Activated CD4-positive, alpha-beta memory T cell treated with anti-CD3 and anti-CD28 coated beads, Interleukin-2, amount 10 ng/mL, durations not matched to agents 7 days and 5 days (primary cell): ENCODE measurements at regions of chr6 and their contacts with region 1.

Region 1: GRCh38 chr6:32984605-32985389 is 16.4 kb downstream of the BRD2 start:
- DNase-seq: peak; percentile 91
- H3K4me3 Mint-ChIP-seq: no peak overlapping the region
- H3K27ac Mint-ChIP-seq: peak overlapping the region; percentile 37
- H3K4me1 Mint-ChIP-seq: peaks cover 42% of the 10 kb centered on the region
- H3K27me3 Mint-ChIP-seq: peaks cover under 1% of the 10 kb centered on the region

Region 2: GRCh38 chr6:32838114-32838958 is 146.5 kb before region 1 on chr6 and contains the start of gene TAP2:
- CTCF ChIA-PET with region 1: interaction called, 27 read pairs
- POLR2A ChIA-PET with region 1: interaction called, 5 read pairs
- DNase-seq: peak; percentile 98
- H3K4me3 Mint-ChIP-seq: peak within 1 kb of the TSS; percentile 77
- H3K27ac Mint-ChIP-seq: peak within 1 kb of the TSS; percentile 99
- H3K4me1 Mint-ChIP-seq: peaks cover 80% of the 10 kb centered on the region
- H3K27me3 Mint-ChIP-seq: no peaks in the 10 kb centered on the region
- total RNA-seq, gene TAP2: 203 to 211 TPM

Region 3: DNA sequence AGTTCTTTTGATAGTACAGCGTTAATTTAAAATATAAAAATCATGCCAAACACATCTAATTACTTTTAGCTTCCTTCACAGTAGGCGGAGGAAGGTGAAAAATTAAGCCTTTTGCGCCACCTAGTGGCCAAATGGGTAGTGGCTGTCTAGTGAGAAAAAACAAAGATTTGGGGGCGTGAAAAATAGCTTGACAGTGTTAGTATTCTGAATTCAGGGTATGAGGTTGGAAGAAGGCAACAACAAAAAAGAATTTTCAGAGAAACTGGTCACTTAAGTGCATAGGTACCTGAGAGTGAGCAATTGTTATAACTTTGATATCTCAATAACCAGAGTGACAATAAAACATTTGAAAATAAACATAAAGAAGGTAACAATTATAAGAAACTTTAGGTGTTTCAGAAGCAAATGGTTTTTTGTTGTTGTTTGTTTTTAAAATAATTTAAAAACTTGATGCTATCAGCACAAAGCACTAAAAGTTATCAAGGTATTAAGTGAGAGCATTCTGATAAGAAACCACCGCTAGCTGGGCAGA is 116.5 kb before region 1 on chr6:
- CTCF ChIA-PET with region 1: interaction called, 45 read pairs
- POLR2A ChIA-PET with region 1: interaction called, 4 read pairs
- DNase-seq: peak; percentile 88
- H3K4me3 Mint-ChIP-seq: no peak overlapping the region
- H3K27ac Mint-ChIP-seq: no peak overlapping the region
- H3K4me1 Mint-ChIP-seq: peaks cover 35% of the 10 kb centered on the region
- H3K27me3 Mint-ChIP-seq: peaks cover 7% of the 10 kb centered on the region

Region 4: DNA sequence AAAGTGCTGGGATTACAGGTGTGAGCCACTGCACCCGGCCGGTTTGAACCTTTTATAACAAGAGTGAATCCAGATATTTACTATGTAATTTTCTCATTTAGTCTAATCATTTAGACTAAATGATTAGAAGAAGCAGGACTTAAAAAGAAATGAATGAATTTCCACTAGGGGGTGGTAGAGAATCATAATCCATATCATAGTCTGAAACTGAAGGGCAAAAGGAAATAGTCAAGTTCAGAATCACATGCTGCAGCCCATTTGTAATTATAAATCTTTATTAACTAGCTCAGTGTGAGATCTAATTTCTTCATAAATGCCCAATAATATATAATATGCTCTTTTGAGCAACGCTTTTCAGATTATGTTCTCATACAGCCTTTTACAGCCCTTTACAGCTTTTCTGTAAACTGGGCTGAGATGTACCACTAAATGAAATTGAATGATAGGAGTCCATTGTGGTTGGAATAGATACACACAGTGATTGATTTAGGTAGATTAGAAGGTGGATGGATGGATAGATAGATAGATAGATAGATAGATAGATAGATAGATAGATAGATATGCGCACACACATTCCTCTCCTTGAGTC is 99.0 kb before region 1 on chr6:
- CTCF ChIA-PET with region 1: interaction called, 70 read pairs
- POLR2A ChIA-PET with region 1: interaction called, 9 read pairs
- DNase-seq: no peak
- H3K4me3 Mint-ChIP-seq: no peak overlapping the region
- H3K27ac Mint-ChIP-seq: no peak overlapping the region
- H3K4me1 Mint-ChIP-seq: peaks cover 2% of the 10 kb centered on the region
- H3K27me3 Mint-ChIP-seq: peaks cover 4% of the 10 kb centered on the region

Region 5: GRCh38 chr6:32905078-32905477 is 79.7 kb before region 1 on chr6:
- CTCF ChIA-PET with region 1: interaction called, 10 read pairs
- POLR2A ChIA-PET with region 1: no interaction called
- DNase-seq: no peak
- H3K4me3 Mint-ChIP-seq: no peak overlapping the region
- H3K27ac Mint-ChIP-seq: no peak overlapping the region
- H3K4me1 Mint-ChIP-seq: no peaks in the 10 kb centered on the region
- H3K27me3 Mint-ChIP-seq: peaks cover 16% of the 10 kb centered on the region

Region 6: DNA sequence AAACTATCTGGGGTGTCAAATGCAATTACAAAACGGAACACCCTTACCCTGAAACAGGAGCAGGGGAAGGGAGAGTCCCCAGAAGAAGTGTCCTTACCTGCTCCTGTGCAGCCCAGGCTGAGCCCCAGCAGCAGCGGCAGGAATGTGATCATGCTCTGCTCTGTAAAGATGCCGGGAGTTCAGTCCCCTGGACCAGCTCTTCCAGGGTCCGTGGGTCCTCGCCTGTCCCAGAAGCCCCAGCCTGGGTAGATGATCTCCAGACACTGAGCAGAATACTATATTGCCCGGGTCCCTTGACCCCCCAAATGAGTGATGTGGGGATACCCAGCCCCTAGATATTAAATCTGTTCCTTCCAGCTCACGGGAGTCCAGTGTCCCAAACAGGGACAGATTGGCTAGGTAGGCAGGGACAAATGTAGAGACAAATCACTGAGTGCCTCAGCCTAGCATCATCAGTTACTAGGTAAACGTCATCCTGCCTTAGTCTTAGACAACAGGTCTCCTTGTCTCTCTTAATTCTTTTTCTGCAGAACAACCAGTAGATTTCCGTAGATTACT is 44.1 kb before region 1 on chr6 and contains the start of gene HLA-DMB:
- CTCF ChIA-PET with region 1: interaction called, 140 read pairs
- POLR2A ChIA-PET with region 1: interaction called, 5 read pairs
- DNase-seq: peak; percentile 60
- H3K4me3 Mint-ChIP-seq: peak within 1 kb of the TSS; percentile 82
- H3K27ac Mint-ChIP-seq: peak within 1 kb of the TSS; percentile 94
- H3K4me1 Mint-ChIP-seq: peaks cover 59% of the 10 kb centered on the region
- H3K27me3 Mint-ChIP-seq: no peaks in the 10 kb centered on the region
- total RNA-seq, gene HLA-DMB: 19.1 to 20.0 TPM

Region 7: GRCh38 chr6:32952817-32953739 is 31.7 kb before region 1 on chr6 and contains the start of gene HLA-DMA:
- CTCF ChIA-PET with region 1: interaction called, 64 read pairs
- POLR2A ChIA-PET with region 1: interaction called, 18 read pairs
- DNase-seq: peak; percentile 83
- H3K4me3 Mint-ChIP-seq: peak within 1 kb of the TSS; percentile 81
- H3K27ac Mint-ChIP-seq: peak within 1 kb of the TSS; percentile 67
- H3K4me1 Mint-ChIP-seq: peaks cover 56% of the 10 kb centered on the region
- H3K27me3 Mint-ChIP-seq: no peaks in the 10 kb centered on the region
- total RNA-seq, gene HLA-DMA: 54.0 to 54.3 TPM

Region 8: DNA sequence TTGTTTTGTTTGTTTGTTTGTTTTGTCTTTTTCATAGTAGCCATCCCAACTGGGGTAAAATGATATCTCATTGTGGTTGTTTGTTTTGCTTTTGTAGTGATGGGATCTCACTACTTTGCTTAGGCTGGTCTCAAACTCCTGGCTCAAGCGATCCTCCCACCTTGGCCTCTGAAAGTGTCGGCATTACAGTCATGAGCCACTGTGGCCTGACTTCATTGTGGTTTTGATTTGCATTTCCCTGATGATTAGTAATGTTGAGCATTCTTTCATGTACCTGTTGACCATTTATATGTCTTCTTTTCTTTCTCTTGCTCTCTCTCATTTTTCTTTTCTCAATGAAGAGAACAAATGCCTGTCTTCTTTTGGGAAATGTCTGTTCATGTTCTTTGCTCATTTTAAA is 55.4 kb after region 1 on chr6:
- CTCF ChIA-PET with region 1: no interaction called
- POLR2A ChIA-PET with region 1: no interaction called
- DNase-seq: no peak
- H3K4me3 Mint-ChIP-seq: no peak overlapping the region
- H3K27ac Mint-ChIP-seq: no peak overlapping the region
- H3K4me1 Mint-ChIP-seq: no peaks in the 10 kb centered on the region
- H3K27me3 Mint-ChIP-seq: peaks cover 70% of the 10 kb centered on the region